Activated CD8-positive, alpha-beta T cell treated with anti-CD3 and anti-CD28 coated beads for 36 hours (primary cell): ENCODE measurements at regions of chr15 and their contacts with region 1.

Region 1: GRCh38 chr15:25933456-25934158 is 70.5 kb upstream of the ATP10A start:
- DNase-seq: peak; percentile 83
- ATAC-seq: peak; percentile 98
- H3K4me3 Mint-ChIP-seq: peak overlapping the region; percentile 81
- H3K27ac Mint-ChIP-seq: peak overlapping the region; percentile 79
- H3K4me1 Mint-ChIP-seq: peaks cover 6% of the 10 kb centered on the region
- H3K27me3 Mint-ChIP-seq: peaks cover 2% of the 10 kb centered on the region
- CTCF ChIP-seq: peak; percentile 79

Region 2: GRCh38 chr15:25508369-25509002 is 425.1 kb before region 1 on chr15:
- CTCF ChIA-PET with region 1: interaction called, 16 read pairs
- POLR2A ChIA-PET with region 1: no interaction called
- intact Hi-C with region 1: loop called (anchors 10 kb)
- DNase-seq: peak; percentile 3
- ATAC-seq: no peak
- H3K4me3 Mint-ChIP-seq: no peak overlapping the region
- H3K27ac Mint-ChIP-seq: no peak overlapping the region
- H3K4me1 Mint-ChIP-seq: no peaks in the 10 kb centered on the region
- H3K27me3 Mint-ChIP-seq: peaks cover 3% of the 10 kb centered on the region
- CTCF ChIP-seq: peak; percentile 68

Region 3: DNA sequence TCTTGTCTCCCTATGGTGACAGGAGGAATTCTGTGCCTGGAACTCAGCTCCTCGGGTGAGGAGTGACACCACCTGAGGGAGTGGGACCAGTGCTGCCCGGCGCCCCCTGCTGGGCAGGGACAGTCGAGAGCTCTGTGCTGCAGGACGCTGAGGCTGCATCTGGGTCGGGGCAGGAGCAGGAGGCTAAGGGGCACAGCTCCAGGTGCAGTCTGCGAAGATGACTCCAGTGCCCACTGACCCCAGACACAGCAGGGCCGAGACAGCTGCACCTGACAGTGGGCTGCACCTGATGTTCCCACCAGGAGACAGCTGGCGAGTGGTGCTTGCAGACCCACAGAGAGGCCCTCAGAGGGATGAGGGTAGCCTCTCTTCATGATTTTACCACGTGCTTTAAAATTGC is 223.4 kb before region 1 on chr15:
- CTCF ChIA-PET with region 1: interaction called, 15 read pairs
- POLR2A ChIA-PET with region 1: no interaction called
- intact Hi-C with region 1: no loop called
- DNase-seq: peak; percentile 61
- ATAC-seq: peak; percentile 84
- H3K4me3 Mint-ChIP-seq: no peak overlapping the region
- H3K27ac Mint-ChIP-seq: no peak overlapping the region
- H3K4me1 Mint-ChIP-seq: no peaks in the 10 kb centered on the region
- H3K27me3 Mint-ChIP-seq: no peaks in the 10 kb centered on the region
- CTCF ChIP-seq: peak; percentile 84

Region 4: DNA sequence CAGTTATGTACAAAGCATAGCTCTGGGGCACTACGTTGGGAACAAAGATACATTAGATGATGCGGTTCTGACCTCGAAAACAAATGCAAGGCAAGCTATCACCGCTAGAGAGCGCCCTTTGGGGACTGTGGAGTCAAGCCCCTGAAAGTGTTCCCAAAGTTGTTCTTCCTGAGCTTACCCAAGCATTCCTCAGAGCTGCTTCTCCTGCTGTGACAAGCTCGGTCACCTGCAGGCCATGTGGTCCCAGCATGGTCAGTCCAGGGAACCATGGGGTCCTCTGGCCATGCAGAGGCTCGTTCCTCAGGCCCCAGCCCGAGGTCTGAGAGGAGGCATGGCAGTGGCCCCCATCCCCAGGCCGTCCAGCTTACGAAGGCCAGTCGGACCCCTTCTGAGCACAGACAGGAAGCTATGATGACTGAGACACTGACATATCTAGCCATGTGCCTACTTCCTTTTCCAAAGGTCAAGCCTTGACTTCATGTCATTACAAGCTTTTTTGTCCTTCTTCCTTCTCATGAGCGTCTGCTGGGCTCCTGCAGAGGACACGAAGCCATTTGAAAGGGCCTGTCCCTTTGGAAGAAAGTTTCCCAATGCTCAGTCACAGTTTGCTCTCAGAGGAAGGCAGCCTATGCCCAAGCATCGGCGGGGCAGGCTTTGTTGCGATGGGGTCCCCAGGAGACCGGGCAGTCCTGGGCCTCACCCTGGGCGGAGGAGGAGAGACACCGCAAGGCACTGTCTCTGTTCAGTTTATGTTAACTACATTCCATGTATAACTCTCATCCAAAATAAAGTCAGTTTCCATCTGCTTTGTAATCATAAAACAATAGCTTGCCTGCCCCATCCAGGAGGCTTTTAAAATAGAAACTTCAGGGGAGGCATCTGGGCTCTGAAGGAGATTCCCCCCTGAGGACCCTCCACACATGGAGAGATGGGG is 149.7 kb before region 1 on chr15:
- CTCF ChIA-PET with region 1: interaction called, 19 read pairs
- POLR2A ChIA-PET with region 1: no interaction called
- intact Hi-C with region 1: loop called (anchors 5 kb)
- DNase-seq: peak; percentile 55
- ATAC-seq: peak; percentile 43
- H3K4me3 Mint-ChIP-seq: no peak overlapping the region
- H3K27ac Mint-ChIP-seq: peak overlapping the region; percentile 74
- H3K4me1 Mint-ChIP-seq: peaks cover 37% of the 10 kb centered on the region
- H3K27me3 Mint-ChIP-seq: no peaks in the 10 kb centered on the region
- CTCF ChIP-seq: peak; percentile 41

Region 5: GRCh38 chr15:25863111-25863967 is 70.3 kb before region 1 on chr15 and contains the start of gene ATP10A:
- CTCF ChIA-PET with region 1: interaction called, 16 read pairs
- POLR2A ChIA-PET with region 1: interaction called, 3 read pairs
- intact Hi-C with region 1: no loop called
- DNase-seq: peak; percentile 61
- ATAC-seq: peak; percentile 7
- H3K4me3 Mint-ChIP-seq: peak within 1 kb of the TSS; percentile 91
- H3K27ac Mint-ChIP-seq: peak within 1 kb of the TSS; percentile 92
- H3K4me1 Mint-ChIP-seq: peaks cover 23% of the 10 kb centered on the region
- H3K27me3 Mint-ChIP-seq: no peaks in the 10 kb centered on the region
- CTCF ChIP-seq: no peak
- total RNA-seq, gene ATP10A: 17.8 to 21.0 TPM

Region 6: GRCh38 chr15:26294059-26294689 is 360.6 kb after region 1 on chr15:
- CTCF ChIA-PET with region 1: no interaction called
- POLR2A ChIA-PET with region 1: no interaction called
- intact Hi-C with region 1: no loop called
- DNase-seq: no peak
- ATAC-seq: no peak
- H3K4me3 Mint-ChIP-seq: no peak overlapping the region
- H3K27ac Mint-ChIP-seq: no peak overlapping the region
- H3K4me1 Mint-ChIP-seq: no peaks in the 10 kb centered on the region
- H3K27me3 Mint-ChIP-seq: no peaks in the 10 kb centered on the region
- CTCF ChIP-seq: no peak